AG04449 (cell line): ENCODE measurements at regions of chr2 and their contacts with region 1.

Region 1: DNA sequence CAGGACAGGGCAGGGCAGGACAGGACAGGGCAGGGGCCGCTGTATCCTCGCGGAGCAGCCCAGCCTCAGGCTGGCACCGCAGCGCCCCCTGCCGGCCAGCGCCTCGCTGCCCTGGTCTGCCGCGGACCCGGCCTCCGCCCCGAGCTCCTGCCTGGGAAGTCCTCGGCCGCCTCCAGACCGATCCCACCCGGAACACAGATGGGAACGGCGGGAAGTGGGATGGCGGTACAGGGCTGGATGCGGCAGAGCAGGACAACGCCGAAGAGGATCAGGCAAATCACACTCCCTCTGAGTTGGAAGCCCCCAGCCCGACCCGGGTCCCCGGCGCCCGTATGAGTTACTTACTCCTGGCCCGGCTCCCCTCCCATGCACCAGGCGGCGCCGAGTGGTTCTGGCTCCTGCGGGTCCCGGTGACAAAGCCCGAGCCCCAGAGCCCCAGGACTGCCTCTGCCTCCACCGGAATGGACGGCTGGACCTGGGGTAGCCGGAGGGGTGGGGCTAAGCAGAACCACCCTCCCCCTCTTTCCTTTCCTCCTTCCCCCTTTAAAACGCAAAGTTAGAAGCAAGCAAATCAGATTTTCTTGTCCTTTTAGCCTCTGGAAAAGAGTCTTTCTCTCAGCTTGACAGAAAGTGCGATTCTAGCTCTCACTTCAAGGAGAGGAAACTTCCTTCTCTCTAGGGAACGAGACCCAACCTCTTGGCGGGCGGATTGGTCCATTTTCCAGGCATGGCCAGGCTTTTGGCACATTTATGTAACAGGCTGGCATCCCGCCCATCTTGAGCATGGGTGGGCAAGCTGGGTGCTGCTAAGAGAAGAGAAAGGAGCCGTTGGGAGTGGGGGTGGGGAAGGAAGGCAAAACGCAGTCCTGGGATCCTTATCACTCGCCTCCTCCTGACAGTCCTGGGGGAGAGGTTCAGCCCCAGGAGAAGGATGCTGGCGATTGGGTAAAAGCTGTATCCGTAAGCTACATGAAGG is at the start of gene TP53I3:
- DNase-seq: no peak
- H3K4me3 ChIP-seq: peak within 1 kb of the TSS; percentile 82
- CTCF ChIP-seq: peak; percentile 95

Region 2: DNA sequence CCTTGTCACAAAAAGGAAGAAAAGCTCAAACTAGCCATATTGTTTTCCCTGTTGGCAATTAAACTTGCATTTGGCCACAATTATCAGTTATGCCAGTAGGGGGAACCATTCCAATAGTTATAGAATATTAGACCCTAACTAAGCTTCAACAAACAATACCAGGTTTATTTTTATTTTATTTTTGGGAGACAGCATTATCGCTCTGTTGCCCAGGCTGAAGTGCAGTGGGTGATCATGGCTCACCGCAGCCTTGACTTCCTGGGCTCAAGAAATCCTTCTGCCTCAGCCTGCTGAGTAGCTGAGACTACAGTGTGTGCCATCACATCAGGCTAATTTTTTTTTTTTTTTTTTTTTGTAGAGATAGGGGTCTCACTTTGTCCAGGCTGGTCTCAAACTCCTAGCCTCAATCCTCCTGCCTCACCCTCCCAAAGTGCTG is 259.9 kb before region 1 on chr2:
- CTCF ChIA-PET with region 1: interaction called, 40 read pairs
- POLR2A ChIA-PET with region 1: interaction called, 10 read pairs
- DNase-seq: no peak
- H3K4me3 ChIP-seq: no peak overlapping the region
- CTCF ChIP-seq: peak; percentile 44

Region 3: DNA sequence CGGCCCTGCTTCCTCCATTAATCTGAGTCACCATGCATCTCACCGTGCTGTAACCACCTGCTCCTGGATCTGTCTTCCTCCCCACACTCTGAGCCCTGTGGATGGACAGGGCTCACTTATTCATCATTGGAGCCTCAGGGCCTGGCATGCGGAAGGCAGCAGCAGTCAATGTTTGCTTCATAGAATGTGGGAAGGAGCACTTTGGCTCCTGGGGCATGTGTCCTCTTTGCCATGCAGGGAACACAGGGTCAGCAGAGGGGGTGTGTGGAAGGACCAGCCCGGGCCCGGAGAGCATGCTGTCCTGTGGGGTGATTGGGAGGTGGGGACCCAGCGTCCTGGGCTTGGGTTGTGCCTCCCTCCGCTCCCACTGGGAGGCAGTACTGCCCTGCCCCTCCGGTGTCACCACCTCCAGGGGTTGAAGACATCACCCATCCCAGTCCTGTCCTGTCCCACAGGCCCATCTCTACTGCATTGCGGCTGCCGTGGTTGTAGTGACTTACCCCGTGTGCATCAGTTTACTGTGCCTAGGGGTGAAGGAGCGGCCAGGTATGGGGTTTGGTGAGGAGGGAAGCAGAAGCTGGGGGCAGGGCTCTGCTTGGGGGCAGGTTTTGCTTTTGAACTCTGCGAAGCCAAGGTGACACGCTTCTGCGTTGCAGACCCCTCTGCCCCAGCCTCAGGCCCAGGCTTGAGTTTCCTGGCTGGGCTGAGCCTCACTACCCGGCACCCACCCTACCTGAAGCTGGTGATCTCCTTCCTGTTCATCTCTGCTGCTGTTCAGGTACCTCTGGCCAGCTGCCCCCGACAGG is 63.3 kb before region 1 on chr2:
- CTCF ChIA-PET with region 1: no interaction called
- POLR2A ChIA-PET with region 1: no interaction called
- DNase-seq: no peak
- H3K4me3 ChIP-seq: no peak overlapping the region
- CTCF ChIP-seq: peak; percentile 31

Region 4: DNA sequence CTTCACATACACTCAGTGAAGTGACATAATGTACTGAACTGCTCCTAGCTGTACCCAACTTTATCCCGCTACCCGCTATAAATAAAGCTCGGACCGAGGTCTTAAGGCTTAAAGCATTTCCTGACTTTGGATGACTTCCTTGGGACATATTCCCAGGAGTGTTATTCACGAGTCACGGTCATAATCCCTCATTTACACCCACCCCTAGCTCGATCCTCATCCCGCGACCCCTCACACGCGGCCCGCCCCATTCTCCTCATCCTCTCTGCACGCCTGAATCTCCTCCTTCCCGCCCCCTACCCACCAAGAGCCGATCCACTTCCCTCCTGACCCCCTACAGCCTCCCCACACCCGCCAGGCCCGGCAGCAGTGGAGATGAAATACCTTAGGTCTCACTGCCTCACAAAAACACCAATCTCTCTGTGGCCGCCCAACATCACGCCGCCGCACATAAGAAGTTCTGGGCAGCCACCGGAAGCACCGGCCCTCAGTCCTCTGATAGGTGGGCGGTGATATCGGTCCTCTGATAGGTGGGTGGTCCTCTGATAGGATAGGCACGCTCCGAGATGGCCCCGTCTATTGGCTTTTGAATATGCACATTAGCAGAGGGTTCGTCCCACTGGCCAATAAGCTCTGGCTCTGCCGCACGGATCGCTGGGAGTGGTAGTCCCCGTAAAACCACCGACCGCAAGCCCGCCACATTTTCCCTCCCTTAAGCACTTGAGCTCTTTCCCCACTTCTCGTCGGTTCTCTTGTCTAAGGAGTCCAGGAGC is 37.6 kb before region 1 on chr2 and contains the start of gene WDCP:
- CTCF ChIA-PET with region 1: interaction called, 13 read pairs
- POLR2A ChIA-PET with region 1: interaction called, 6 read pairs
- DNase-seq: peak; percentile 93
- H3K4me3 ChIP-seq: peak within 1 kb of the TSS; percentile 87
- CTCF ChIP-seq: no peak

Region 5: GRCh38 chr2:24111407-24111901 is 26.8 kb after region 1 on chr2:
- CTCF ChIA-PET with region 1: interaction called, 17 read pairs
- POLR2A ChIA-PET with region 1: interaction called, 3 read pairs
- DNase-seq: peak; percentile 56
- H3K4me3 ChIP-seq: no peak overlapping the region
- CTCF ChIP-seq: no peak

Region 6: DNA sequence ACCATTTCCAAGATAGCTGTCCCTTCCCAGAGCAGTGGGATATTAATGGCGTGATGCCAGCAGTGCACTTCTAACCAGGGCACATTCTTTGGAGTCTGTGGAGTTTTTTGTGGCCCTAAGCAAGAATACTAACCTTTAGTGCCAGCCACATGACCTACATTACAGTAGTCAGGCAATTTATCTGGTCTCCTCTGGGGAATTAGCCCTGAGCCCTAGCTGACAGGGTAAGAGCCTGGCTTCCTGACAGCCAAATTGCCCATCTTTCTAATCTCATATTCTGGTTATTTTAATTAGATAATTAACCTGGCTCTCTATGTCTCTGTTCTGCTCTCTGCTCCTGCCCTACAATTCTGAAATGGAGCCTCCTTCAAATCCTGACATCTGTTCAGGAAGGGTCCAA is 33.2 kb after region 1 on chr2:
- CTCF ChIA-PET with region 1: interaction called, 17 read pairs
- POLR2A ChIA-PET with region 1: interaction called, 5 read pairs
- DNase-seq: no peak
- H3K4me3 ChIP-seq: no peak overlapping the region
- CTCF ChIP-seq: no peak

Region 7: DNA sequence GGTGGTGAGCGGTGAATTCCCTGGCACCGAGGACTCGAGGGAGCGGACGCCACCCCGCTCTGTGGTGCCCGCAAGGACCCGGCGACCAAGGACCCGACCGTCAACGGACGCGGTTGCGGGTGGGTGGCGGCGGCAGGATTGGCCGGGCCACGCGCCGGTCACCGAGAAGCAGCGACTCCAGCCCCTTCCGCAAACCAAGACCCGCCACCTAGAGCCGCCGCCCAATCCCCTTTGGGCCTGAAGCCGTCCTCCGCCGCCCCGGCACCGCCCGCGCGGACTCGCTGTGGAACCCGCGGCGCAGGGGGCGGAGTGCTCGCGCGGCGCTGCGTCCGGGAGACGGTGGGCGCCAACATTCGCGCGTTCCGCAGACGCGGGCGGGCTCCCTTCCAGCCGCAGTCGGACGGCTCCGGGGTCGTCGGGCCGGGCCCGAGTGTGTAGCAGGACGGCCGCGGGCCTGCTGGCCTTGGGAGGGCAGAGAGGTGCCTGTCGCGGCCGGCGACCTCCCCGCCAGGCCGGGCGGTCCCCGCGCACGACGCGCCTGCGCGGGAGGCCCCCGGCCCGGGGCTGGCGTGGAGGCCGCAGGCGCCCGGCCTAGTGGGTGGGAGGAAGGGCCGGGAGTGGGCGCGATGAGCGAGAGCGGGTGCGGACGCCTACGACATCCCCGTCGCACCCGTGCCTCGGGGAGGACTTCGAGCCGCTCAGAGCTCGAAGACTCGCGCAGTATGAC is 38.7 kb after region 1 on chr2 and contains the starts of genes FAM228B and PFN4:
- CTCF ChIA-PET with region 1: interaction called, 17 read pairs
- POLR2A ChIA-PET with region 1: interaction called, 10 read pairs
- DNase-seq: no peak
- H3K4me3 ChIP-seq: peak within 1 kb of the TSS; percentile 83
- CTCF ChIP-seq: no peak